ENCODE measurements at regions of chr19 and their contacts with region 1.

Region 1: DNA sequence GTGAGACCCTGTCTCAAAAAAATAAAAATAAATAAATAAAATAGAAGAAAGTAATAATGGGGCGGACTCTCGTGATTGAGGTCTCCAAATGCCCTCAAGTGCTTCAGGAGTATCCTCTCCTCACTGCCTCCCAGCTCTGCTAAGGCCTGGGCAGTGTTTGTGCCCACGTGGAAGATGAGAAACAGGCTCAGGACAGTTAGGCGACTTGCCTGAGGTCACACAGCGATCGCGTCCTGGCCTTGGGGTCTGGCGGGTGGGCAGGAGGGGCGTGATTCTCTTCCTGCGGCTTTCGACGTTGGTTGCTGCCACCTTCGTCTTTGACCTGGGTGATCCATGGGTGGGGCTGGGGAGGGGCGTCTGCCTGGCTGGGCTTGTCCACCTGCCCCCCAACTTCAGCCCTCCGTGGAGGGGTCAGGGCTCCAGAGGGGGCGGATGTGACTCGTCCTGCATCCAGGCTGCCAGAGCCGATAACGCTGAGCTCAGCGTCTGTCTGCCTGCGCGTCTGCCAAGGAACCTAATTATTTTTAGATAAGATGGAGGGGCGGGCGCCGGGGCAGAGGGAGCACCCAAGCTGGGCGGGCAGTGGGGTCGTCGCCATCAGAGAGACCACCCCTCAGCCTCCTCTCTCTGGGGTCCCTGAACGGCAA is 56.9 kb downstream of the NFIC start:
- DNase-seq: no peak
- ATAC-seq: no peak
- H3K4me3 Mint-ChIP-seq: no peak overlapping the region
- H3K27ac Mint-ChIP-seq: no peak overlapping the region
- H3K4me1 Mint-ChIP-seq: peaks cover 2 to 8% (median 5%) of the 10 kb centered on the region in 4 donors
- H3K27me3 Mint-ChIP-seq: no peaks in the 10 kb centered on the region

Region 2: DNA sequence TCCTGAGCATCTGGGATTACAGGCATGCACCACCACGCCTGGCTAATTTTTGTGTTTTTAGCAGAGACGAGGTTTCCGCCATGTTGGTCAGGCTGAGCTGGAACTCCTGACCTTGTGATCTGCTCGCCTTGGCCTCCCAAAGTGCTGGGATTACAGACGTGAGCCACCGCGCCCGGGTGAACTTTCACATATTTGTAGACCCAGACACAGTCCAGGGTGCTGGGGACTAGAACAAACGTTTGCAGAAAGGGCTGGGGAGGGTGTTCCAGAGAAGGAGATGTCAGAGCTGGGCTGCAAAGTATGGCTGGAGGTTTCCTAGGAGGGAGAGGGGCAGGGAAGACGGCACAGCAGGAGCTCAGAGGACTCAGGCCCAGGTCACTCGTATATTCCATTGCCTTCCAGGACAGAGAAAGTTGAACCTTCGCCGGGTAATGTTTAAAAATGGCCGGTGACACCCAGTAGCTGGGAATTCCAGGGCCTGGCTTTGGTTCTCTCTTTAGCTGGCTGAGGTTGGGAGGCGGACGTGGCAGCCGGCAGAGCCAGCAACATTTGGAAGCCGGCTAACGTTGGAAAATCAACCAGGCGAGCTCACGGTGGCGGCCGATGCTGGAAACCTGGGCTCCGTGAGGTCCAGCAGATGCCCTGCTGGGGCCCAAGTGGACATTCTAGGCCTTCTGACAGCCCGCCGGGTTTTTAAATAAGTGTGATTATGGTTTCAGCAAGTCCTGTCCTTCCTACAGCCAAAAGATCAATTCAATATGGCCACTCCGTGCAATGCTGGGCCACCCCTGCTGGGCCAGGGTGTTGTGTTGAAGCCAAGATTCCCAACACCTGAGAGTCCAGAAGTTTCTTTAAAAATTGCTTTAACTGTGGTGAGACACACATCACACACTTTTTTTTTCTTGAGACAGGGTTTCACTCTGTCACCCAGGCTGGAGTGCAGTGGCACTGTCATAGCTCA is 15.5 kb before region 1 on chr19:
- POLR2A ChIA-PET with region 1: no interaction called
- DNase-seq: no peak
- ATAC-seq: no peak
- H3K4me3 Mint-ChIP-seq: no peak overlapping the region
- H3K27ac Mint-ChIP-seq: no peak overlapping the region
- H3K4me1 Mint-ChIP-seq: peaks cover 0 to 6% (median under 1%) of the 10 kb centered on the region in 4 donors
- H3K27me3 Mint-ChIP-seq: no peaks in the 10 kb centered on the region

Region 3: DNA sequence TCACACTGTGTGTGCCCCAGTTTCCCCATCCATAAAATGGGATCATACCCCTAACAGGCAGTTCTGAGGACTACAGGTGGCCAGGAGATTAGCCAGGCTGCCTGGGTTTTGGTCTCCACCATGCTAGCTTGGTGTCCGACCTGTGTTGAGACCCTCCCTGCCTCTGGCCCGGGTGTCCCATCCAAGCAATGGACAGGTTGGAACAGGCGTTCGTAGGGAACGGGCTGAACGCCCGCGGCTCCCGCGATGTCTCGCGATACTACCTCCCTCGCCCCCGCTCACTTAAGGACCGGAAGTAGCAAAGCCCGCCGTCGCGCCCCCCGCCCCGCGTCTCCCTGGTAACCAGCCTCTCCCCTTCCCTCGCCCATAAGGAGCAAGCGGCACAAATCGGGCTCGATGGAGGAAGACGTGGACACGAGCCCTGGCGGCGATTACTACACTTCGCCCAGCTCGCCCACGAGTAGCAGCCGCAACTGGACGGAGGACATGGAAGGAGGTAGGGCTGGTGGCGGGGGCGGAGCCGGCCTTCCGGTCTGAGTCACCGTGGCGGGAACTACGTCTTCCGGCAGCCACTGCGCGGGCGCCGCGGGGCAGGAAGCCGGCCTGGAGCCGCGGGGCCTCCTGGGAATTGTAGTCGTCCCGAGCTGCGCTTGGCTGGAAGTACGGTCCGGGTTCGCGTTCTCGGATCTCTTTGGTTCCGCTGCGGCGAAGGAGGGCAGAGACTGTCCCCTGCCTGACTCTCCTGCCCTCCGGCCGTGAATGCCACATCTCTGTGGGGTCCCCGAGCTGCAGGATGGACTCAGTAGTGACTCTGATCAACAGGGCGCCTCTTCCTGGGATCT is 11.6 kb after region 1 on chr19:
- POLR2A ChIA-PET with region 1: interaction called, 12 read pairs
- DNase-seq: peak; percentile 87 to 98 (median 95)
- ATAC-seq: peak; percentile 95 to 98
- H3K4me3 Mint-ChIP-seq: peak overlapping the region; percentile 92 to 99 (median 98)
- H3K27ac Mint-ChIP-seq: peak overlapping the region; percentile 94 to 100 (median 99)
- H3K4me1 Mint-ChIP-seq: peaks cover 6 to 20% (median 16%) of the 10 kb centered on the region in 4 donors
- H3K27me3 Mint-ChIP-seq: no peaks in the 10 kb centered on the region

Region 4: GRCh38 chr19:3471954-3472655 is 48.8 kb after region 1 on chr19:
- POLR2A ChIA-PET with region 1: no interaction called
- DNase-seq: peak in 8 of 10 donors; percentile 16 to 43 (median 34)
- ATAC-seq: peak in 1 of 2 donors; percentile 46
- H3K4me3 Mint-ChIP-seq: no peak overlapping the region
- H3K27ac Mint-ChIP-seq: peak overlapping the region in 1 of 10 donors; percentile 29
- H3K4me1 Mint-ChIP-seq: peaks cover 0 to 2% (median 0%) of the 10 kb centered on the region in 4 donors
- H3K27me3 Mint-ChIP-seq: no peaks in the 10 kb centered on the region

Region 5: DNA sequence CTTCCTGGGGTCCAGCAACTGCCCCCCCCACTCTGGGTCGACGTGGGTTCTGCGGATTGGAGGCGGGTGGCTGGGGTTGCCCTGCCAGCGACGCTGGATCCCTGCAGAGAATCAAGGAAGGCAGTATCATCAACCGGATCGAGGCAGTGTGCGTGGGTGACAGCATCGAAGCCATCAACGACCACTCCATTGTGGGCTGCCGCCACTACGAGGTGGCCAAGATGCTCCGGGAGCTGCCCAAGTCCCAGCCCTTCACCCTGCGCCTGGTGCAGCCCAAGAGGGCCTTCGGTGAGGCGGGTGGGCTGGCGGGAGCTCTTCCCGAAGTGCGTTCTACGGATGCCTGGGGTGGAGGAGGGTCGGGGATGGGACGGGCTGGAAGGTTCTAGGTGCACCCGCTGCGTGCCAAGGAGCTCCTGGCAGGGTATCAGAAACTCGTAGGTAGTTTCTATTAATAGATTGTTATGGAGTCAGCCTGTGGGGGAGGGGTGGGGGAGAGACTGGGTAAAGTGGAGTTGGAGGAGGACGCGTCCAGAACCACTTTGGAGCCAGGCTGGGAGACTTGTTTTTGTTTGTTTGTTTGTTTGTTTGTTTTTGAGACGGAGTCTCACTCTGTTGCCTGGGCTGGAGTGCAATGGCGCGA is 163.5 kb after region 1 on chr19:
- POLR2A ChIA-PET with region 1: no interaction called
- DNase-seq: no peak
- ATAC-seq: no peak
- H3K4me3 Mint-ChIP-seq: peak overlapping the region in 3 of 10 donors; percentile 26 to 65 (median 29)
- H3K27ac Mint-ChIP-seq: peak overlapping the region in 1 of 10 donors; percentile 50
- H3K4me1 Mint-ChIP-seq: peaks cover 0 to 3% (median 0%) of the 10 kb centered on the region in 4 donors
- H3K27me3 Mint-ChIP-seq: no peaks in the 10 kb centered on the region